Endothelial cell of umbilical vein (primary cell): ENCODE measurements at regions of chr3 and their contacts with region 1.

Region 1: DNA sequence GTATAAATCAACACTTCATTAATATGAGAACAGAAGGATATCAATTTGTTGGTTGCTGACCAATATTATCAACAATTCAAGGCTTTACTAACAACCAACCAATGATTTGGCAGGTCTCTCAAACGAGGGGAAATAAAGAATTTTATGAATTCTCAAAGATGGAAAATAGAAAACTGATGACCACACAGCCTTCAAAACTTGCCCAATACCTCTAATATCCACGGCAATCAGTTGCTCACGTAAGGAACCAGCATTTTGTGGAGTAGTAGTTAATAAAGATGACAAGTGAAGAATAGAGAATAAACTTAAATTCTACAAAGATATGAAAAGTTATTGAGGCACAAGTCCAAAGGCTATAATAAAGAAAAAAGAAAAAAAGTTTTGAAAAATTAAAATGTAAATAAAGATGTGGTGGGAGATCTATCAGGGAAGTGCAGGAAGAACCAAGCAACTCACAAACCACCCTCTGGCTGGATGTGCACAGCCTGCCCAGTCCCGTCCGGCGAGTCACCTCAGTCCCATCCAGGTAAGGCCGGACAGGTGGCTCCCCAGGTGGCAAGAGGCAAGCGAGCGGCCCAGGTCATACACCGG is 808 bp downstream of the GK5 start:
- DNase-seq: no peak
- H3K4me3 ChIP-seq: peak overlapping the region; percentile 64 to 74 (median 72)
- H3K27ac ChIP-seq: peak overlapping the region; percentile 69
- H3K4me1 ChIP-seq: peaks cover 6% of the 10 kb centered on the region
- H3K27me3 ChIP-seq: no peaks in the 10 kb centered on the region
- CTCF ChIP-seq: no peak
- POLR2A ChIP-seq: no peak

Region 2: GRCh38 chr3:142148792-142149672 is 75.5 kb before region 1 on chr3 and contains the start of gene TFDP2:
- CTCF ChIA-PET with region 1: interaction called, 3 read pairs
- POLR2A ChIA-PET with region 1: no interaction called
- dilution Hi-C with region 1: no loop called
- intact Hi-C with region 1: loop called (anchors 5 kb)
- DNase-seq: peak; percentile 92
- H3K4me3 ChIP-seq: peak within 1 kb of the TSS; percentile 24 to 75 (median 51)
- H3K27ac ChIP-seq: peak within 1 kb of the TSS; percentile 28
- H3K4me1 ChIP-seq: peaks cover 13% of the 10 kb centered on the region
- H3K27me3 ChIP-seq: peaks cover 0 to 3% of the 10 kb centered on the region in 2 experiments
- CTCF ChIP-seq: no peak
- POLR2A ChIP-seq: no peak
- total RNA-seq, gene TFDP2: 21.5 and 23.6 TPM in 2 replicates

Region 3: GRCh38 chr3:142211035-142211434 is 13.5 kb before region 1 on chr3:
- CTCF ChIA-PET with region 1: interaction called, 9 read pairs
- POLR2A ChIA-PET with region 1: no interaction called
- dilution Hi-C with region 1: no loop called
- intact Hi-C with region 1: loop called (anchors 1 kb)
- DNase-seq: peak; percentile 26
- H3K4me3 ChIP-seq: no peak overlapping the region
- H3K27ac ChIP-seq: no peak overlapping the region
- H3K4me1 ChIP-seq: peaks cover 9% of the 10 kb centered on the region
- H3K27me3 ChIP-seq: no peaks in the 10 kb centered on the region
- CTCF ChIP-seq: peak in 1 of 2 donors; percentile 31
- POLR2A ChIP-seq: no peak